Activated CD4-positive, alpha-beta T cell treated with anti-CD3 and anti-CD28 coated beads for 36 hours (primary cell): ENCODE measurements at regions of chr6 and their contacts with region 1.

Region 1: GRCh38 chr6:116531675-116532570 is 13.6 kb downstream of the TRAPPC3L start:
- DNase-seq: peak; percentile 77
- ATAC-seq: peak; percentile 91
- H3K4me3 Mint-ChIP-seq: no peak overlapping the region
- H3K27ac Mint-ChIP-seq: no peak overlapping the region
- H3K4me1 Mint-ChIP-seq: no peaks in the 10 kb centered on the region
- H3K27me3 Mint-ChIP-seq: peaks cover 10% of the 10 kb centered on the region

Region 2: DNA sequence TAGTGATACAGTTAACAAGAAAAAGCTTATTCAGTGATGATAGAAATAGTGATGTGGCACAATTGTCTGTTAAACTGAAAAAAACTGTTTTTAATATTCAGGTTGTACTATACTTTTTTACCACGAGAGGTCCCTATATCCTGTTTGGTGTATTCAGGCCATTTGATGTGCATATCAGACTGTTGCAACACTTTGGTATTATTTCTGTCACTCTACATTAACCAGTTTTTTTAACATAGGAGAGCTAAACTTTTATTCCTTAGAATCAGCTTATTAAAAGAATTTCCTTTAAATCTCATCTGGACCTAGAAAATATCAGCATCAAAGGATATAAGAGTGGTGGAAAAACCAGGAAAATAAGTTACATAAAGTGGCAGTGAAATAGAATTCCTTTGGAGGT is 314.9 kb before region 1 on chr6:
- CTCF ChIA-PET with region 1: interaction called, 7 read pairs
- POLR2A ChIA-PET with region 1: interaction called, 4 read pairs
- intact Hi-C with region 1: loop called (anchors 2 kb)
- DNase-seq: no peak
- ATAC-seq: peak; percentile 49
- H3K4me3 Mint-ChIP-seq: no peak overlapping the region
- H3K27ac Mint-ChIP-seq: no peak overlapping the region
- H3K4me1 Mint-ChIP-seq: peaks cover 5% of the 10 kb centered on the region
- H3K27me3 Mint-ChIP-seq: no peaks in the 10 kb centered on the region

Region 3: GRCh38 chr6:116287689-116288282 is 244.1 kb before region 1 on chr6:
- CTCF ChIA-PET with region 1: interaction called, 76 read pairs
- POLR2A ChIA-PET with region 1: no interaction called
- intact Hi-C with region 1: loop called (anchors 1 kb)
- DNase-seq: no peak
- ATAC-seq: peak; percentile 72
- H3K4me3 Mint-ChIP-seq: no peak overlapping the region
- H3K27ac Mint-ChIP-seq: no peak overlapping the region
- H3K4me1 Mint-ChIP-seq: no peaks in the 10 kb centered on the region
- H3K27me3 Mint-ChIP-seq: no peaks in the 10 kb centered on the region

Region 4: GRCh38 chr6:116542426-116542825 is 10.5 kb after region 1 on chr6:
- CTCF ChIA-PET with region 1: interaction called, 13 read pairs
- POLR2A ChIA-PET with region 1: no interaction called
- intact Hi-C with region 1: no loop called
- DNase-seq: no peak
- ATAC-seq: no peak
- H3K4me3 Mint-ChIP-seq: no peak overlapping the region
- H3K27ac Mint-ChIP-seq: no peak overlapping the region
- H3K4me1 Mint-ChIP-seq: no peaks in the 10 kb centered on the region
- H3K27me3 Mint-ChIP-seq: peaks cover 17% of the 10 kb centered on the region

Region 5: DNA sequence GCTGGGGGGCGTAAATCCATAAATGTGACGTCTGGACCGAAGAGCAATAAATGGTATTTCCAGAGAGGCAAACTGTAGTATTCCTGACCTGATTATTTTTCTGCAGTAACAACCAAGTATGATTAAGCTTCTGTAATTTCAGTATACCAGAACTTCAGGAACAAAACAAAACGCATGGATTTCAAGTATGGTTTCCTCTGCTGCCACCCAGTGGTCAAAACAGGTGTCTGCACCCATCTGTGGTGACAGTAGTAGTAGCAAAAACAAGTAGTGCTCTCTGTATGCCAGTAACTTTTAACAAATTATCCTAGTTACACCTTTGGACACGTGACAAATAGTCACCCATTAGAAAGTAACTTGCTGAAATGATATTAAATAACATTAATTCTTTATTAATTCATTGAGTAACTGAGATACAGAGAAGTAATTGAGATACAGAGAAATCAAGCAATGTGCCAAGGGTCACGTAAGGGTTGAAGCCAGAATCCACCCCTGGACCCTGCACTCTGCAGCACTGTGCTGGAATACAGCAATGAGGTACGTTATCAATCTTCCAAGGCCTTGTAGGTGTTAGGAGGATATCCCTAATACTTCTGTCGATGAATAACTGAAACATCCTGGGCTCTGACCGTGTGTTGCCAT is 29.6 kb after region 1 on chr6:
- CTCF ChIA-PET with region 1: interaction called, 39 read pairs
- POLR2A ChIA-PET with region 1: no interaction called
- intact Hi-C with region 1: loop called (anchors 1 kb)
- DNase-seq: peak; percentile 79
- ATAC-seq: peak; percentile 87
- H3K4me3 Mint-ChIP-seq: no peak overlapping the region
- H3K27ac Mint-ChIP-seq: no peak overlapping the region
- H3K4me1 Mint-ChIP-seq: peaks cover 1% of the 10 kb centered on the region
- H3K27me3 Mint-ChIP-seq: peaks cover 11% of the 10 kb centered on the region

Region 6: DNA sequence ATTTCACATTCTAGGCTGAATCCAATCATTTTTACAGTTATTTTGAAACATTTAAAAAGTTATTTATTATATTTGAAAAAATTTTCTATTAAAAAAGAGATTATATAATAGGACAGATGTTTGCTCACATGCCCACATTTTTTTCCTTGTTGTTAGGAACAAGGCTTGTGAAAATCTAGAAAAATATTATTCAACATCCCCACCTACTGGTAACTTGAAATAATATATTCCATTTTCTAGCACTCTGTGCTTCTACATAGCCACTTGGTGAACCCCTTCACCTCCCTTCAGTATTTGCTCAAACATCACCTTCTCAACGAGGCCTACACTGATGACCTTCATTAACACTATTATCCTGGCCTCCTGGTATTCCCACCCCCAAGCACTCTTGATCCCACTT is 315.3 kb after region 1 on chr6:
- CTCF ChIA-PET with region 1: no interaction called
- POLR2A ChIA-PET with region 1: no interaction called
- intact Hi-C with region 1: loop called (anchors 2 to 5 kb)
- DNase-seq: no peak
- ATAC-seq: no peak
- H3K4me3 Mint-ChIP-seq: no peak overlapping the region
- H3K27ac Mint-ChIP-seq: no peak overlapping the region
- H3K4me1 Mint-ChIP-seq: no peaks in the 10 kb centered on the region
- H3K27me3 Mint-ChIP-seq: peaks cover 7% of the 10 kb centered on the region